Thyroid gland (tissue), 4 donors: ENCODE measurements at regions of chr4 and their contacts with region 1.

Region 1: DNA sequence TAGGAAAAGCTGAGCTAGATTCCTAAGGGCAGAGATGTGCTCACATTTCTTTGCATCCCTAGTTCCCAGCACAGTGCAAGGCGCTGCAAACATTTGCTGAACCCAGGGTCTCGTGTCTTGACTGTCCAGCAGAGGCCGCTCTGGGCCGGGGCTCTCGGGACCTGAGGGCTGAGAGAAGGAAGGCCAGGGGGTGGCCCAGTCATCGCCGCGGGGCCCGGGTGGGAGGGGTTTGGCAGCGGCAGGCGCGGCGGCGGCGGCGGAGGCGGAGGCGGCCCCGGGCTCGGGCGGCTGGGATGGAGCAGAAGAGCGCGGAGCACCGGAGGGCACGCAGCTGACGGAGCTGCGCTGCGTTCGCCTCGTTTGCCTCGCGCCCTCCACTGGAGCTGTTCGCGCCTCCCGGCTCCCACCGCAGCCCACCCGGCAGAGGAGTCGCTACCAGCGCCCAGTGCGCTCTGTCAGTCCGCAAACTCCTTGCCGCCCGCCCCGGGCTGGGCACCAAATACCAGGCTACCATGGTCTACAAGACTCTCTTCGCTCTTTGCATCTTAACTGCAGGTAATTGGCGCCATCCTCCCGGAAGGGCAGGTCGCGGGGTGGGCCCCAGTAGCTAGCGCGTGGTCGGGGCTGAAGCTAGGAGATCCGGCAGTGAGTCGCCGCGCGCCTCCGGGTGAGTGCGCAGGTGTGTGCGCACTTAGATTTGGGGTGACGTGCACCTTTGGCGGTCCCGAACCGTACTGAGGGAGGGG is at the start of gene PARM1:
- DNase-seq: peak; percentile 95 to 96
- H3K4me3 ChIP-seq: peak within 1 kb of the TSS; percentile 72 to 96 (median 74)
- H3K27ac ChIP-seq: peak within 1 kb of the TSS; percentile 87 to 99 (median 98)
- H3K4me1 ChIP-seq: peaks cover 7 to 18% of the 10 kb centered on the region in 2 donors
- H3K27me3 ChIP-seq: no peaks in the 10 kb centered on the region
- CTCF ChIP-seq: peak; percentile 55 to 93 (median 81)
- POLR2A ChIP-seq: peak; percentile 86 to 98
- total RNA-seq, gene PARM1: 319 to 575 (median 470) TPM

Region 2: DNA sequence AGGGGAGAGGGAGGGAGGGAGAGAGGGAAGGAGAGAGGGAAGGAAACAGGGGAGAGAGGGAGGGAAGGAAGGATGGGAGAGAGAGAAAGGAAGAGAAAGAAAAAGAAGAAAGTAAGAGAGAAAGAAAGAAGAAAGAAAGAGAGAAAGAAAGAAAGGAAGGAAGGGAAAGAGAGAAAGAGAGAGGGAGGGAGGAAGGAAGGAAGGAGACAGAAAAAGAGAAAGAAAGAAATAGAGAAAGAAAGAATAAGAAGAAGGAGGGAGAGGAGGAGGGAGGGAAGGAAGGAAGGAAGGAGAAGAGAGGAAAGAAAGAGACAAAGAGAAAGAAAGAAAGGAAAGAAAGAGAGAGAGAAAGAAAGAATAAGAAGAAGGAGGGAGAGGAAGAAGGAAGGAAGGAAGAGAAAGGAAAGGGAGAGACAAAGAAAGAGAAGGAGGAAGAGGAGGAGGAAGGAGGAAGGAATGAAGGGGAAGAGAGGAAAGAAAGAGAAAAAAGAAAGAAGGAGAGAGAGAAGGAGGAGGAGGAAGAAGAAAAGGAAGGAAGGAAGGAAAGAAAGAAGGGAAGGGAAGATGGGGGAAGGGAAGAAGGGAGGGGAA is 189.5 kb after region 1 on chr4:
- intact Hi-C with region 1: loop called (anchors 5 kb)
- DNase-seq: no peak
- H3K4me3 ChIP-seq: no peak overlapping the region
- H3K27ac ChIP-seq: no peak overlapping the region
- H3K4me1 ChIP-seq: peaks cover 3 to 4% of the 10 kb centered on the region in 2 donors
- H3K27me3 ChIP-seq: no peaks in the 10 kb centered on the region
- CTCF ChIP-seq: no peak
- POLR2A ChIP-seq: no peak

Region 3: DNA sequence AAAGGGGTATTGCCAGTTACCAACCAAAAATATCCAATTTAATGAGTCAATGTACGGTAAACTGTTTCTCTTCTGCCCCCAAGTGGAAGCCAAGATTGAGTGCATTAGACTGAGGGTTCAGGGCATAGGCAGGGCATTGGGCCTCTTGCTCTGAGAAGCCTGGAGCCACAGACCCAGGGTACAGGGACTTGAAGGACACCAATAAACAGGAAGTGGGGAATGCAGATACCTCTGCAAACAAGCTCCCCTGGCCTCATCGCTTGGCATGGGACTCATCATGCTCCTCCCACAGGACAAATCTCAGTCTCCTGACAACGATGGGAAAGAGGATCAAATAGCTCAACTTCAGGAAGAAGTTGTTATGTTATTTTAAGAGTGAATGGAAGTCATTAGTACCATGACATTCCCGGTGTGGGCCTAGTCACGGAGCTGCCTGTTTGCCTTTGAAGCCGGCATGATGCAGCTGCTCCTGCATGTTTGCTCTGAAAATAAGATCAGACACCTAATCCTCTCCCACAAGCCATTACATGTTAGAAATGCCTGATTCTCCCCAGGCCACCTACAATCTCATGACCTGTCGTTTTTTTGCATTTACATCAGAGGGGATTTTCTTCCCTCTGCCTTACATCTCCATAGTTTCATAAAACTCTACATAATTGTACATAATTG is 357.1 kb after region 1 on chr4:
- intact Hi-C with region 1: loop called (anchors 10 kb)
- DNase-seq: peak in 1 of 2 donors; percentile 6
- H3K4me3 ChIP-seq: no peak overlapping the region
- H3K27ac ChIP-seq: no peak overlapping the region
- H3K4me1 ChIP-seq: no peaks in the 10 kb centered on the region
- H3K27me3 ChIP-seq: no peaks in the 10 kb centered on the region
- CTCF ChIP-seq: peak in 4 of 6 experiments; percentile 14 to 46 (median 39)
- POLR2A ChIP-seq: no peak